ENCODE measurements at regions of chr5 and their contacts with region 1.

Region 1: GRCh38 chr5:96662725-96663513 is 743 bp downstream of the CAST start:
- DNase-seq: peak; percentile 72 to 90 (median 82)
- ATAC-seq: peak; percentile 84
- H3K4me3 ChIP-seq: peak overlapping the region; percentile 86
- H3K4me3 Mint-ChIP-seq: peak overlapping the region; percentile 86 to 100 (median 95)
- H3K27ac ChIP-seq: peak overlapping the region; percentile 87
- H3K27ac Mint-ChIP-seq: peak overlapping the region; percentile 76 to 99 (median 95)
- H3K4me1 ChIP-seq: peaks cover 20 to 26% of the 10 kb centered on the region in 2 donors
- H3K4me1 Mint-ChIP-seq: peaks cover 30 to 64% (median 50%) of the 10 kb centered on the region in 7 donors
- H3K27me3 ChIP-seq: no peaks in the 10 kb centered on the region
- H3K27me3 Mint-ChIP-seq: peaks cover 0 to 14% (median 0%) of the 10 kb centered on the region in 5 donors

Region 2: DNA sequence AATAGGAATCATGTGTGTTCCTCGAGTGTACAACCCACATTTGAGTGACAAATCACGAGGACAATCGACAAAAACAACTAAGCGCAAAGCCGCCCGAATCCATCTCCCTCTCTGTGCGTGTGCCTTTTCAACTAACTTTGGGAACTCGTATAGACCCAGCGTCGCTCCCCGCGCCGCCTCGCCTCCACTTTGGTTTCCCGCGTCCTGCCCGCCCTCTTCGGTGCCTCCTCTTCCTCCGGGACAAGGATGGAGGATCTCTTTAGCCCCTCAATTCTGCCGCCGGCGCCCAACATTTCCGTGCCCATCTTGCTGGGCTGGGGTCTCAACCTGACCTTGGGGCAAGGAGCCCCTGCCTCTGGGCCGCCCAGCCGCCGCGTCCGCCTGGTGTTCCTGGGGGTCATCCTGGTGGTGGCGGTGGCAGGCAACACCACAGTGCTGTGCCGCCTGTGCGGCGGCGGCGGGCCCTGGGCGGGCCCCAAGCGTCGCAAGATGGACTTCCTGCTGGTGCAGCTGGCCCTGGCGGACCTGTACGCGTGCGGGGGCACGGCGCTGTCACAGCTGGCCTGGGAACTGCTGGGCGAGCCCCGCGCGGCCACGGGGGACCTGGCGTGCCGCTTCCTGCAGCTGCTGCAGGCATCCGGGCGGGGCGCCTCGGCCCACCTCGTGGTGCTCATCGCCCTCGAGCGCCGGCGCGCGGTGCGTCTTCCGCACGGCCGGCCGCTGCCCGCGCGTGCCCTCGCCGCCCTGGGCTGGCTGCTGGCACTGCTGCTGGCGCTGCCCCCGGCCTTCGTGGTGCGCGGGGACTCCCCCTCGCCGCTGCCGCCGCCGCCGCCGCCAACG is 1042.7 kb before region 1 on chr5 and contains the start of gene GPR150:
- CTCF ChIA-PET with region 1: no interaction called
- POLR2A ChIA-PET with region 1: no interaction called
- intact Hi-C with region 1: loop called in 1 of 2 experiments (anchors 5 kb)
- DNase-seq: peak; percentile 44 to 67 (median 61)
- ATAC-seq: peak; percentile 77
- H3K4me3 ChIP-seq: peak within 1 kb of the TSS; percentile 75
- H3K4me3 Mint-ChIP-seq: peak within 1 kb of the TSS; percentile 88 to 96 (median 92)
- H3K27ac ChIP-seq: peak within 1 kb of the TSS; percentile 71
- H3K27ac Mint-ChIP-seq: peak within 1 kb of the TSS; percentile 60 to 87 (median 81)
- H3K4me1 ChIP-seq: peaks cover 22 to 46% of the 10 kb centered on the region in 2 donors
- H3K4me1 Mint-ChIP-seq: peaks cover 34 to 82% (median 67%) of the 10 kb centered on the region in 7 donors
- H3K27me3 ChIP-seq: no peaks in the 10 kb centered on the region
- H3K27me3 Mint-ChIP-seq: peaks cover 0 to 18% (median 0%) of the 10 kb centered on the region in 5 donors
- total RNA-seq, gene GPR150: 0.48 to 1.5 (median 1.1) TPM

Region 3: DNA sequence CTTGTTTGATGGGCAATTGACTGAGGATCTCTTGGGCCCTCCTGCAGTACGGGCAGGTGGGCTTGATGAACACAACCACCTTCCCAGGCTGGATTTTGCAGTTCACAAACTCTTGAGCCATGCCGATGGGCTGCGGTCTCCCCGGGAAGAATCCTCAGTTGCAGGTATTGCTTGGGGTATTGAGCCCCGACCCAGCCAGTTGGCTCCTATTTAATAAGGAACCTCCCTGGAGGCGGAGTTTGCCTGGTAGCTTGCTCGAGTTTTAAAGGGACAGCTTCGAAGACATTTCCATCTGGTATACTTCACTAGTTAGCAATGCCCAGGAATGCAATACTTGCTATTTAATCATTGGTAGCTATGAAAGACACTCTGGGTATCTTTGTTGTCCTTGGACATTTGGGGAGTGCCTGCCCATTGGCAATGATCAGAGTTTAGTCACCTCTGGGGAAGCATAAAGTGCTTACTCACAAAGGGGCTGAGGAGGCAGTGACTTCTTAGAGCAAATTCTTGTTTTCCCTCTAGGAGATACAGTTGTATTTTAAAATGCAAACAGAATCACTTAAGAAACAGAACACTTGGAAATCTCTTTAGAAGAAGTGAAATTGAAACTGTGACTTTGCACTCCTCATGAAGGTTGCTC is 840.3 kb before region 1 on chr5 and contains the start of gene GLRX:
- CTCF ChIA-PET with region 1: no interaction called
- POLR2A ChIA-PET with region 1: interaction called, 4 read pairs
- intact Hi-C with region 1: loop called (anchors 5 kb)
- DNase-seq: peak in 8 of 9 donors; percentile 48 to 62 (median 58)
- ATAC-seq: peak; percentile 52
- H3K4me3 ChIP-seq: peak within 1 kb of the TSS; percentile 93
- H3K4me3 Mint-ChIP-seq: peak within 1 kb of the TSS; percentile 91 to 100 (median 99)
- H3K27ac ChIP-seq: peak within 1 kb of the TSS; percentile 84
- H3K27ac Mint-ChIP-seq: peak within 1 kb of the TSS; percentile 91 to 97 (median 95)
- H3K4me1 ChIP-seq: peaks cover 38% of the 10 kb centered on the region in 2 donors
- H3K4me1 Mint-ChIP-seq: peaks cover 53 to 78% (median 61%) of the 10 kb centered on the region in 7 donors
- H3K27me3 ChIP-seq: no peaks in the 10 kb centered on the region
- H3K27me3 Mint-ChIP-seq: no peaks in the 10 kb centered on the region
- total RNA-seq, gene GLRX: 26.3 to 89.5 (median 55.6) TPM

Region 4: DNA sequence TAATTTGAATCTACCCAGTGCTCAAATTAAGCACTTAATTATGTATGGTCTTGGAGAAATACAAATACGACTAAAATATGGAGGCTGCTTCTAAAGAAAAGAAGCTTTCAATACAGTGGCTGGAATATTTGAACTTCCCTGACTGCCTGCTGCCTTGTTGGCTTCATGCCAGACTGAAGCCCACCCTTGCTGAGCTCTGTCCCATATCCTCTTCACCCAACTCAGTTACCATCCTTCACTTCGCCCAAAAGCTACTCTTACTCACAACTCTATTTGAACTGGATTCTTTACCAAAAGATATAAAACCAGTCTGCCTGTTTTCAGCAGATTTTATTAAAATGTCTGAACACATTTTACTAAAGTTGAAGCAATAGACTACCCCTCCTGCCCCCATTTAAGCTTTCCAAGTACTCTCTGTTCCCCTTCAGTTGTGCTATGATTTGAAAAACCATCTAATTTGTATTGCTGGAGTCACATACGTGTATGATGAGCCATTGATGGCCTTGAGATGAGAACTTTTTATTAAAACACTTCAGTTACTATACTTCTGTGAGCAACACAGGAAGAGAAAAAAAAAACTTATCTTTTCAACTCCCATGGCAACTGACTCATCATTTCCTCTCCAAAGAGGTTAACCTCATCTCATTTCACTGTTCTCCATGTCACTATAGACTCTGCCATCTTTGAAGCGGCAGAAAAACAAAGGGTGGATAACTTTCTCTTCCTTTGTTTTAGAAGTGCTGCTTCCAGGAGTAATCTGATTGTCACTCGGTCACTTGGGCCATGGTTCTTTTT is 125.7 kb before region 1 on chr5:
- CTCF ChIA-PET with region 1: no interaction called
- POLR2A ChIA-PET with region 1: no interaction called
- intact Hi-C with region 1: loop called (anchors 1 to 2 kb)
- DNase-seq: peak in 7 of 9 donors; percentile 54 to 79 (median 73)
- ATAC-seq: peak; percentile 97
- H3K4me3 ChIP-seq: peak overlapping the region; percentile 14
- H3K4me3 Mint-ChIP-seq: peak overlapping the region in 9 of 10 donors; percentile 26 to 76 (median 61)
- H3K27ac ChIP-seq: peak overlapping the region; percentile 41
- H3K27ac Mint-ChIP-seq: peak overlapping the region; percentile 82 to 94 (median 88)
- H3K4me1 ChIP-seq: peaks cover 20 to 23% of the 10 kb centered on the region in 2 donors
- H3K4me1 Mint-ChIP-seq: peaks cover 15 to 41% (median 32%) of the 10 kb centered on the region in 7 donors
- H3K27me3 ChIP-seq: no peaks in the 10 kb centered on the region
- H3K27me3 Mint-ChIP-seq: peaks cover 0 to 6% (median 0%) of the 10 kb centered on the region in 5 donors

Region 5: GRCh38 chr5:96687812-96688453 is 25.0 kb after region 1 on chr5:
- CTCF ChIA-PET with region 1: interaction called, 3 read pairs
- POLR2A ChIA-PET with region 1: interaction called, 3 read pairs
- intact Hi-C with region 1: loop called (anchors 1 to 2 kb)
- DNase-seq: peak in 7 of 9 donors; percentile 14 to 47 (median 35)
- ATAC-seq: peak; percentile 84
- H3K4me3 ChIP-seq: no peak overlapping the region
- H3K4me3 Mint-ChIP-seq: peak overlapping the region in 5 of 10 donors; percentile 18 to 65 (median 26)
- H3K27ac ChIP-seq: no peak overlapping the region
- H3K27ac Mint-ChIP-seq: peak overlapping the region in 1 of 9 donors; percentile 47
- H3K4me1 ChIP-seq: no peaks in the 10 kb centered on the region
- H3K4me1 Mint-ChIP-seq: peaks cover 15 to 23% (median 20%) of the 10 kb centered on the region in 7 donors
- H3K27me3 ChIP-seq: no peaks in the 10 kb centered on the region
- H3K27me3 Mint-ChIP-seq: no peaks in the 10 kb centered on the region

Region 6: GRCh38 chr5:96876292-96876850 is 213.5 kb after region 1 on chr5 and contains the start of gene ERAP2:
- CTCF ChIA-PET with region 1: no interaction called
- POLR2A ChIA-PET with region 1: no interaction called
- intact Hi-C with region 1: loop called in 1 of 2 experiments (anchors 5 kb)
- DNase-seq: peak in 7 of 9 donors; percentile 53 to 73 (median 64)
- ATAC-seq: peak; percentile 79
- H3K4me3 ChIP-seq: peak within 1 kb of the TSS; percentile 85
- H3K4me3 Mint-ChIP-seq: peak within 1 kb of the TSS; percentile 81 to 99 (median 96)
- H3K27ac ChIP-seq: peak within 1 kb of the TSS; percentile 80
- H3K27ac Mint-ChIP-seq: peak within 1 kb of the TSS; percentile 91 to 99 (median 97)
- H3K4me1 ChIP-seq: peaks cover 26 to 56% of the 10 kb centered on the region in 2 donors
- H3K4me1 Mint-ChIP-seq: peaks cover 44 to 76% (median 73%) of the 10 kb centered on the region in 7 donors
- H3K27me3 ChIP-seq: no peaks in the 10 kb centered on the region
- H3K27me3 Mint-ChIP-seq: no peaks in the 10 kb centered on the region
- total RNA-seq, gene ERAP2: 42.5 to 158 (median 97.2) TPM

Region 7: GRCh38 chr5:97183100-97183929 is 520.4 kb after region 1 on chr5 and contains the start of gene RIOK2:
- CTCF ChIA-PET with region 1: no interaction called
- POLR2A ChIA-PET with region 1: interaction called, 9 read pairs
- intact Hi-C with region 1: loop called (anchors 1 kb)
- DNase-seq: peak; percentile 77 to 93 (median 91)
- ATAC-seq: peak; percentile 96
- H3K4me3 ChIP-seq: peak within 1 kb of the TSS; percentile 82
- H3K4me3 Mint-ChIP-seq: peak within 1 kb of the TSS; percentile 89 to 98 (median 94)
- H3K27ac ChIP-seq: peak within 1 kb of the TSS; percentile 94
- H3K27ac Mint-ChIP-seq: peak within 1 kb of the TSS; percentile 99 to 100 (median 100)
- H3K4me1 ChIP-seq: peaks cover 4 to 14% of the 10 kb centered on the region in 2 donors
- H3K4me1 Mint-ChIP-seq: peaks cover 23 to 54% (median 44%) of the 10 kb centered on the region in 7 donors
- H3K27me3 ChIP-seq: no peaks in the 10 kb centered on the region
- H3K27me3 Mint-ChIP-seq: peaks cover 0 to 3% (median 0%) of the 10 kb centered on the region in 5 donors
- total RNA-seq, gene RIOK2: 18.8 to 36.0 (median 28.5) TPM